ENCODE measurements at regions of chr16 and their contacts with region 1.

Region 1: DNA sequence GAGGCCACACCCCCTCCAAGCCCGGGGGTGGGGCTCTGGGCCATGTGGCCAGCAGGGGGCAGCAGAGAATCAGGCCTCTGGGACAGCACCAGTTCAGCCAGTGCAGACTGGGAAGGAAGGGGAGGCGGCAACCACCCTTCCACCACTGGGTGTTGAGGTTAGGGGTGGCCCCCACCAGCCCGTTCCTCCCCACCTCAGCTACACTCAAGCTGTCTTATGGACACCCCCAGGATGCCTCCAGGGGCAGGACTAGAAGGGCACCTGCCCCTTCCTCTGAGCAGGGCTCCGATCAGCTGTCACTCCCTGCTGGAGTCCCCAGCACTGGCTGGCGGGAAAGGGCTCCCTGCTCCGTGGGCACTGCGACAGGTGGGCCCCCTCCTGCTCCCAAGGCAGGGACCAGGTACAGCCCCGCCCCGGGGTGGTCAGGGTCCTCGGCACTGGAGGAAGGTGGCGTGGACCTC is 21.8 kb downstream of the KATNB1 start:
- DNase-seq: peak; percentile 61 to 93 (median 81)
- ATAC-seq: peak; percentile 93
- H3K4me3 ChIP-seq: no peak overlapping the region
- H3K4me3 Mint-ChIP-seq: no peak overlapping the region
- H3K27ac ChIP-seq: no peak overlapping the region
- H3K27ac Mint-ChIP-seq: no peak overlapping the region
- H3K4me1 ChIP-seq: peaks cover 0 to 5% of the 10 kb centered on the region in 2 donors
- H3K4me1 Mint-ChIP-seq: peaks cover 0 to 3% (median 0%) of the 10 kb centered on the region in 7 donors
- H3K27me3 ChIP-seq: no peaks in the 10 kb centered on the region
- H3K27me3 Mint-ChIP-seq: no peaks in the 10 kb centered on the region

Region 2: GRCh38 chr16:57773655-57774295 is 16.4 kb after region 1 on chr16:
- CTCF ChIA-PET with region 1: no interaction called
- POLR2A ChIA-PET with region 1: no interaction called
- intact Hi-C with region 1: no loop called
- DNase-seq: no peak
- ATAC-seq: no peak
- H3K4me3 ChIP-seq: no peak overlapping the region
- H3K4me3 Mint-ChIP-seq: no peak overlapping the region
- H3K27ac ChIP-seq: no peak overlapping the region
- H3K27ac Mint-ChIP-seq: no peak overlapping the region
- H3K4me1 ChIP-seq: no peaks in the 10 kb centered on the region
- H3K4me1 Mint-ChIP-seq: no peaks in the 10 kb centered on the region
- H3K27me3 ChIP-seq: no peaks in the 10 kb centered on the region
- H3K27me3 Mint-ChIP-seq: peaks cover 0 to 3% (median 0%) of the 10 kb centered on the region in 5 donors

Region 3: GRCh38 chr16:57810197-57811031 is 53.1 kb after region 1 on chr16:
- CTCF ChIA-PET with region 1: no interaction called
- POLR2A ChIA-PET with region 1: no interaction called
- intact Hi-C with region 1: loop called in 1 of 2 experiments (anchors 2 kb)
- DNase-seq: peak in 2 of 9 donors; percentile 20 to 79
- ATAC-seq: peak; percentile 97
- H3K4me3 ChIP-seq: peak overlapping the region; percentile 37
- H3K4me3 Mint-ChIP-seq: peak overlapping the region in 1 of 10 donors; percentile 70
- H3K27ac ChIP-seq: no peak overlapping the region
- H3K27ac Mint-ChIP-seq: peak overlapping the region in 4 of 9 donors; percentile 10 to 91 (median 16)
- H3K4me1 ChIP-seq: peaks cover 8 to 39% of the 10 kb centered on the region in 2 donors
- H3K4me1 Mint-ChIP-seq: peaks cover 8 to 30% (median 17%) of the 10 kb centered on the region in 7 donors
- H3K27me3 ChIP-seq: no peaks in the 10 kb centered on the region
- H3K27me3 Mint-ChIP-seq: peaks cover 23 to 40% (median 28%) of the 10 kb centered on the region in 5 donors

Region 4: GRCh38 chr16:57984331-57985203 is 227.2 kb after region 1 on chr16:
- CTCF ChIA-PET with region 1: no interaction called
- POLR2A ChIA-PET with region 1: no interaction called
- intact Hi-C with region 1: loop called in 1 of 2 experiments (anchors 5 kb)
- DNase-seq: peak; percentile 75 to 93 (median 90)
- ATAC-seq: peak; percentile 99
- H3K4me3 ChIP-seq: peak overlapping the region; percentile 63
- H3K4me3 Mint-ChIP-seq: peak overlapping the region; percentile 84 to 94 (median 91)
- H3K27ac ChIP-seq: peak overlapping the region; percentile 64
- H3K27ac Mint-ChIP-seq: peak overlapping the region; percentile 37 to 93 (median 72)
- H3K4me1 ChIP-seq: peaks cover 6% of the 10 kb centered on the region in 2 donors
- H3K4me1 Mint-ChIP-seq: peaks cover 2 to 21% (median 8%) of the 10 kb centered on the region in 7 donors
- H3K27me3 ChIP-seq: no peaks in the 10 kb centered on the region
- H3K27me3 Mint-ChIP-seq: peaks cover 0 to 21% (median 0%) of the 10 kb centered on the region in 5 donors

Measured in naive thymus-derived CD4-positive, alpha-beta T cell (primary cell).